Ascending aorta (tissue), 2 donors: ENCODE measurements at regions of chr6 and their contacts with region 1.

Region 1: GRCh38 chr6:42563697-42564505 is at the start of gene UBR2:
- DNase-seq: peak; percentile 94 to 99
- H3K4me3 ChIP-seq: peak within 1 kb of the TSS; percentile 74 to 80
- H3K27ac ChIP-seq: peak within 1 kb of the TSS; percentile 95 to 96
- H3K4me1 ChIP-seq: peaks cover 0 to 4% of the 10 kb centered on the region in 2 donors
- H3K27me3 ChIP-seq: no peaks in the 10 kb centered on the region
- CTCF ChIP-seq: no peak
- total RNA-seq, gene UBR2: 17.8 TPM

Region 2: GRCh38 chr6:40965046-40965445 is 1598.9 kb before region 1 on chr6:
- intact Hi-C with region 1: no loop called
- DNase-seq: no peak
- H3K4me3 ChIP-seq: no peak overlapping the region
- H3K27ac ChIP-seq: no peak overlapping the region
- H3K4me1 ChIP-seq: no peaks in the 10 kb centered on the region
- H3K27me3 ChIP-seq: no peaks in the 10 kb centered on the region
- CTCF ChIP-seq: no peak

Region 3: DNA sequence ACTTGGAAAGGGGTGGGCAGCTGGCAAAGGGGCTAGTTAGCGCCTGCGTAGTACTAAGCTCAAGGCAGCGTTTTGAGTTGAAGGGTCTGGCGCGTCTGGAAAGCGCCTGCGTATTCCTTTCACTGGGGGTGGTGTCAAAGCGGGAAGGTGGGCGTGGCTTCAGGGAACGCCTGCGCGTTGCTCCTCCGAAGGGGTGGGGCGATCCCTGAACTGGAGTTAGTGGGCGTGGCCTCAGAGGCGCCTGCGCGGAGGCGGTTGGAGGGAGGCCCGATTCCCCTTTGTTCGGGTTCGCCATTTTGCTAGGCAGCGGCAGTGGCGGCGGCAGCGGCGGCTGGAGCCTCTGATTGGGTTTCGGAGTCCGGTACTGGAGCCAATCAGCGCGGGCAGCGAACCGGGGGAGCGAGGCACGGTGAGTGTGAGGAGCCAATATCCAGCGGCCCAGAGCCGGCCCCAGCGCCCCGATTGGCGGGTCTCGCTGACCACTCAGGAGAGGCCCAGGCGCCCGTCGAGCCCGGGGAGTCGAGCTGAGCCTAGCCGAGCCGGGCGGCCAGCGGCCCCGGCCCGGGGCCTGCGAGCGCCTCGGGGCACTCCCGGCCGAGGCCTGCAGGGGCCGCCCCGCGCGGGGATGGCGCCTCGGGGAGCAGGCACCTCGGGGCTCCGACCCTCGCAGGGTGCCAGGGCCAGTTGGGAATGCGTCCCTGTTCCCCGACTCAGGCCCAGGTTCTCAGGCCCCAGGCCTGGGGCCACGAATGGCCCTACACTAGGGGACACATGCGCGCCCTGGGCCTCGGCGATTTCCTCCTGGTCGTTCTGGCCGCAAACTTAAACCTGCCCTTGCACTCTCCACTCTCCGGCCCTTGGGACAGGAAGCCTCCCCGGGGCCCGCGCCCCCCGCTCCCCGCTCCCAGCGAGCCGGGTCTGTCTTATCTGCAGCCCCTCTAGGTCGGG is 1491.0 kb before region 1 on chr6 and contains the start of gene NFYA:
- intact Hi-C with region 1: loop called (anchors 10 kb)
- DNase-seq: peak; percentile 98 to 100
- H3K4me3 ChIP-seq: peak within 1 kb of the TSS; percentile 80 to 86
- H3K27ac ChIP-seq: peak within 1 kb of the TSS; percentile 98 to 100
- H3K4me1 ChIP-seq: peaks cover 10 to 27% of the 10 kb centered on the region in 2 donors
- H3K27me3 ChIP-seq: no peaks in the 10 kb centered on the region
- CTCF ChIP-seq: peak; percentile 19 to 62 (median 25)
- total RNA-seq, gene NFYA: 10.4 TPM

Region 4: GRCh38 chr6:41735427-41736356 is 828.2 kb before region 1 on chr6 and contains the start of gene TFEB:
- intact Hi-C with region 1: loop called (anchors 5 kb)
- DNase-seq: peak; percentile 77 to 97
- H3K4me3 ChIP-seq: peak within 1 kb of the TSS; percentile 92 to 93
- H3K27ac ChIP-seq: peak within 1 kb of the TSS; percentile 90 to 99
- H3K4me1 ChIP-seq: peaks cover 0 to 26% of the 10 kb centered on the region in 2 donors
- H3K27me3 ChIP-seq: no peaks in the 10 kb centered on the region
- CTCF ChIP-seq: peak; percentile 86 to 99 (median 86)
- total RNA-seq, gene TFEB: 18.6 TPM

Region 5: DNA sequence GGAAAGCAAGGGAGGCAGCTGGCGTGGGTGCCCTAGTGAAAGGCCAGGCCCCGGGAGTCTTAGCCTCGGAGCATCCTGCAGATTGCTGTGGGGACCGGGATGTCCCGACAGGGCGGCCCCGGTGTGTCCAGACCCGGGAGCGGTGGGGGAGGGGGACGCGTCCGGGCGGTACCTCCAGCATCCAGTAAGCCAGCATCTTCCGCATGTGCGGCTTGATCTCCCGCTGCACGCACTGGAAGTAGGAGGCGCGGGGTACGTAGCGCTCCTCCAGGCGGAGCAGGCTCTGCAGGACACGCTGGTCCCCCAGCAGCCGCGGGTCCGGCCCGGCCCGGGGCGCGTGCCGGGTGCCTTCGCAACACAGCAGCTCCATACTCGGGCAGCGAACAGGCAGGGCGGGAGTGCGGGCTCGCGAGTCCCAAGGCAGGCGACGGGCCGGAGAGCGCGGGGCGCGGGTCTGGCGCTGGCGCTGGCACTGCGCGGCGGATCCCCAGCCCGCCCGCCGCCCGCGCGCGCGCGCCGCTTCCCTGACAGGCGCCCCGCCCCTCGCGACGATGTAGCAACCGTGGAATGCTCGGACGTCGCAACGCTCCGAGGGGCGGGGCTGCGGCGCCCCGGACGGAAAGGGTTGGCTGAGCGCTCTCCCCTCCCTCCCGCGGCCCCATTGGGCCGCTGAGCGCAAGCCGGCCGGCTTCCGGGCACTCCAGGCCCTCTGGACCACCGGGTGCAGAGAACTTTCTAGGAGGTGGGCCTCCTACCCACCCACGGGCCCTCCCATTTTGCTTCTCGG is 622.4 kb before region 1 on chr6 and contains the start of gene CCND3:
- intact Hi-C with region 1: loop called (anchors 10 kb)
- DNase-seq: peak; percentile 57 to 95
- H3K4me3 ChIP-seq: peak within 1 kb of the TSS; percentile 84 to 93
- H3K27ac ChIP-seq: peak within 1 kb of the TSS; percentile 72 to 83
- H3K4me1 ChIP-seq: peaks cover 4 to 20% of the 10 kb centered on the region in 2 donors
- H3K27me3 ChIP-seq: no peaks in the 10 kb centered on the region
- CTCF ChIP-seq: peak in 1 of 3 experiments; percentile 1
- total RNA-seq, gene CCND3: 130 TPM

Region 6: DNA sequence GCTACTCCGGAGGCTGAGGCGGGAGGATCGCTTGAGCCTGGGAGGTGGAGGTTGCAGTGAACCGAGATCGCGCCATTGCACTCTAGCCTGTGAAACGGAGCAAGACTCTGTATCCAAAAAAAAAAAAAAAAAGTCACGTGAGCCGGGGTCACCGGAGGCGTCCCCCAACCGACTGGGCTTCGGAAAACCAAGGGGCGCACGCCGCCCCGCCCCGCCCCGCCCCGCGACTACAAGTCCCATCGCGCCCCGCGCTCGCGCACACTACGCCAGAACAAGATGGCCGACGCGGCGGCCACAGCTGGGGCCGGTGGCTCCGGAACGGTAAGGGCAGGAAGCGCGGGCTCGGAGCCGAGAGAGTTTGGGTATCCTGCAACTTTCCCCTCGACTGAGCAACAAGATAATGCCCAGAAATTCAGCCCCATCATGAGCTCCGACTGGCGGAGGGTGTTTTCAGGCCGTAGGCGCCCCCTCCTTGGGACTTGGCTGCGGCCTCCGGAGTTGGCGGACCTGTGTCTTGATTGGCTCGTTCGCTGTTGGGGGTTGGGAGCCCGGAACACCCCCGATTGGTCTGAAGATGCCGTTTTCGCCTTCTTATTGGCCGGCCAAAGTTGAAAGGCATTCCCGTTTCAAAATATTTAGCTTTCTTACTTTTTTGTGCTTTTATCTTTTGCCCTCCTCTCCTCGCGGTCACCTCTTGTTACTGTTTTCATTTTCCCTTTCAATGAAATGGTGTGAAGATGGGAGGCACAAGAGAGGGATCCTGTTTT is 513.5 kb before region 1 on chr6 and contains the start of gene TAF8:
- intact Hi-C with region 1: loop called (anchors 1 kb)
- DNase-seq: peak; percentile 66 to 94
- H3K4me3 ChIP-seq: peak within 1 kb of the TSS; percentile 71 to 88
- H3K27ac ChIP-seq: peak within 1 kb of the TSS; percentile 83 to 95
- H3K4me1 ChIP-seq: peaks cover 15 to 26% of the 10 kb centered on the region in 2 donors
- H3K27me3 ChIP-seq: no peaks in the 10 kb centered on the region
- CTCF ChIP-seq: no peak
- total RNA-seq, gene TAF8: 26.0 TPM

Region 7: GRCh38 chr6:42217519-42218367 is 346.2 kb before region 1 on chr6 and contains the start of gene MRPS10:
- intact Hi-C with region 1: loop called (anchors 1 kb)
- DNase-seq: peak; percentile 66 to 96
- H3K4me3 ChIP-seq: peak within 1 kb of the TSS; percentile 59 to 80
- H3K27ac ChIP-seq: peak within 1 kb of the TSS; percentile 61 to 72
- H3K4me1 ChIP-seq: peaks cover 3 to 4% of the 10 kb centered on the region in 2 donors
- H3K27me3 ChIP-seq: no peaks in the 10 kb centered on the region
- CTCF ChIP-seq: no peak
- total RNA-seq, gene MRPS10: 5.4 TPM

Region 8: GRCh38 chr6:42547407-42548329 is 16.2 kb before region 1 on chr6:
- intact Hi-C with region 1: loop called (anchors 2 kb)
- DNase-seq: peak in 1 of 2 donors; percentile 88
- H3K4me3 ChIP-seq: peak overlapping the region; percentile 53 to 67
- H3K27ac ChIP-seq: peak overlapping the region; percentile 23 to 66
- H3K4me1 ChIP-seq: no peaks in the 10 kb centered on the region
- H3K27me3 ChIP-seq: no peaks in the 10 kb centered on the region
- CTCF ChIP-seq: peak; percentile 94 to 99 (median 97)

Region 9: DNA sequence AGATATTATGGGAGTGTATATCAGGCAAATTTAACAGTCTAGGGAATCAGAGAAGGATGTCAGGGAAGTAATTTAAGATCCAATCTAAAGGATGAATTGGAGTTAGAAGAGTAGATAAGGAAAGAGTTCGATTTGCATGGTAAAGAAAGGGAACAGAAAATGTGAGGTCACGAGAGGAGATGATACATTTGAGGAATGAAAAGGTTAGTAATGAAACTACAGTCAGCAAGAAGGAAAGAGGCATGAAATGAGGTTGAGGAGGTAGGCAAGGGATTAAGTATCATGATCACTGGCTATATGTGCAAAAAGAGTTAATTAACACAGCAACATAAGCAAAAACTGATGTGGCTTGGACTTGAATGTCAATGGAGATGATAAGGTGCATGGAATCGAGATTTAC is 783.1 kb after region 1 on chr6:
- intact Hi-C with region 1: no loop called
- DNase-seq: no peak
- H3K4me3 ChIP-seq: no peak overlapping the region
- H3K27ac ChIP-seq: no peak overlapping the region
- H3K4me1 ChIP-seq: no peaks in the 10 kb centered on the region
- H3K27me3 ChIP-seq: no peaks in the 10 kb centered on the region
- CTCF ChIP-seq: no peak